ENCODE measurements at regions of chr19 and their contacts with region 1.

Region 1: GRCh38 chr19:49017666-49018351 is 918 bp upstream of the LHB start:
- DNase-seq: peak; percentile 62
- H3K4me3 Mint-ChIP-seq: peak overlapping the region; percentile 72
- H3K27ac Mint-ChIP-seq: no peak overlapping the region
- H3K4me1 Mint-ChIP-seq: peaks cover 31% of the 10 kb centered on the region
- H3K27me3 Mint-ChIP-seq: peaks cover 26% of the 10 kb centered on the region

Region 2: DNA sequence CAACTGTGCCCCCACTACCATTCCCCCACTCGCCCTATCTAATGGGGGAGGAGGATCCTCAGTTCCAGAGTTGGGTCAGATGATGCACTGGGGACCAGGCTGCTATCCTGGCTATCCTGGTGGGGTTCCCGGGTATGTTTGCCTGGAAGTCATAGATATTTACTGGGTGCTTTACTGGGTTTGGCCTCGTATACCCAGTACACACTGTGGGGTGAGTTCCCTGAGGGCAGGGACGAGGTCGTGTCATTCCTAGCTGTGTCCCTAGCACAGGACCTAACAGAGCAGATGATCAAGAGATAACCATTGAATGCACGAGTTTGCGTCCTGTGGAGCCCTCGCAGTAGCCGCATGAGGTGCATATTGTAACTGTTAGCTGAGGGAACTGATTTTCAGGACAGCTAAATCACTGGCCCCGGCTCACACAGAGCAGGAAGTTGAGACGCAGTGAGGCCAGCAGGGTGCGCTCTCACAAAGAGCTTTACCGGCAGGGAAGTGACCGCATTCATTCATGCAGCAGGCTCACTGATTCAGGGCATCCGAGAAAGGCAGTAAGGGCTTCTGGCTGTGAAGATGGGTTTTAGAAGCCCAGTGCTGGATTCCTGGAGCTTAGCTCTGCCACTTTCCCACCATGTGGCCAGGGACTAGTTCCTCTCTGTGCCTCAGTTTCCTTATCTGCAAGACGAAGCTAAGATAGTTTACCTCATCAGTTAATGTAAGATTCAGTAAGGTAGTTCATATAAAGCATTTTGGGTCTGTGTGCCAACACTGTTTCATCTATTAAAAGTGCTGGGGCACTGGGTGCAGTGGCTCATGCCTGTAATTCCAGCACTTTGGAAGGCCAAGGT is 18.1 kb before region 1 on chr19:
- CTCF ChIA-PET with region 1: interaction called, 23 read pairs
- POLR2A ChIA-PET with region 1: no interaction called
- DNase-seq: peak; percentile 77
- H3K4me3 Mint-ChIP-seq: no peak overlapping the region
- H3K27ac Mint-ChIP-seq: no peak overlapping the region
- H3K4me1 Mint-ChIP-seq: peaks cover 23% of the 10 kb centered on the region
- H3K27me3 Mint-ChIP-seq: no peaks in the 10 kb centered on the region